A673 (cell line): ENCODE measurements at regions of chrX and their contacts with region 1.

Region 1: GRCh38 chrX:54495814-54496516 is at the start of gene FGD1:
- DNase-seq: peak; percentile 72
- H3K4me3 ChIP-seq: peak within 1 kb of the TSS; percentile 76
- H3K27ac ChIP-seq: peak within 1 kb of the TSS; percentile 85
- H3K4me1 ChIP-seq: no peaks in the 10 kb centered on the region
- H3K27me3 ChIP-seq: no peaks in the 10 kb centered on the region
- CTCF ChIP-seq: no peak
- total RNA-seq, gene FGD1: 21.5 and 27.1 TPM in 2 replicates

Region 2: GRCh38 chrX:54288277-54288676 is 207.7 kb before region 1 on chrX:
- CTCF ChIA-PET with region 1: no interaction called
- POLR2A ChIA-PET with region 1: no interaction called
- intact Hi-C with region 1: no loop called
- DNase-seq: peak; percentile 6
- H3K4me3 ChIP-seq: no peak overlapping the region
- H3K27ac ChIP-seq: no peak overlapping the region
- H3K4me1 ChIP-seq: no peaks in the 10 kb centered on the region
- H3K27me3 ChIP-seq: no peaks in the 10 kb centered on the region
- CTCF ChIP-seq: no peak

Region 3: GRCh38 chrX:54529552-54530357 is 33.8 kb after region 1 on chrX and contains the start of gene GNL3L:
- CTCF ChIA-PET with region 1: no interaction called
- POLR2A ChIA-PET with region 1: no interaction called
- intact Hi-C with region 1: loop called (anchors 2 kb)
- DNase-seq: peak; percentile 88
- H3K4me3 ChIP-seq: peak within 1 kb of the TSS; percentile 73
- H3K27ac ChIP-seq: peak within 1 kb of the TSS; percentile 80
- H3K4me1 ChIP-seq: peaks cover 3% of the 10 kb centered on the region
- H3K27me3 ChIP-seq: no peaks in the 10 kb centered on the region
- CTCF ChIP-seq: no peak
- total RNA-seq, gene GNL3L: 71.8 and 89.3 TPM in 2 replicates

Region 4: GRCh38 chrX:54786962-54787361 is 291.0 kb after region 1 on chrX:
- CTCF ChIA-PET with region 1: no interaction called
- POLR2A ChIA-PET with region 1: no interaction called
- intact Hi-C with region 1: no loop called
- DNase-seq: peak; percentile 2
- H3K4me3 ChIP-seq: no peak overlapping the region
- H3K27ac ChIP-seq: no peak overlapping the region
- H3K4me1 ChIP-seq: no peaks in the 10 kb centered on the region
- H3K27me3 ChIP-seq: no peaks in the 10 kb centered on the region
- CTCF ChIP-seq: no peak